Caco-2 (cell line): ENCODE measurements at regions of chr3 and their contacts with region 1.

Region 1: GRCh38 chr3:192237992-192238608 is 489.2 kb downstream of the FGF12 start:
- DNase-seq: peak; percentile 37 to 40
- H3K4me3 ChIP-seq: no peak overlapping the region
- H3K4me3 Mint-ChIP-seq: no peak overlapping the region
- H3K27ac Mint-ChIP-seq: no peak overlapping the region
- H3K4me1 ChIP-seq: peaks cover 11% of the 10 kb centered on the region
- H3K4me1 Mint-ChIP-seq: no peaks in the 10 kb centered on the region
- H3K27me3 ChIP-seq: no peaks in the 10 kb centered on the region
- H3K27me3 Mint-ChIP-seq: peaks cover 6% of the 10 kb centered on the region
- CTCF ChIP-seq: peak; percentile 20 to 43

Region 2: DNA sequence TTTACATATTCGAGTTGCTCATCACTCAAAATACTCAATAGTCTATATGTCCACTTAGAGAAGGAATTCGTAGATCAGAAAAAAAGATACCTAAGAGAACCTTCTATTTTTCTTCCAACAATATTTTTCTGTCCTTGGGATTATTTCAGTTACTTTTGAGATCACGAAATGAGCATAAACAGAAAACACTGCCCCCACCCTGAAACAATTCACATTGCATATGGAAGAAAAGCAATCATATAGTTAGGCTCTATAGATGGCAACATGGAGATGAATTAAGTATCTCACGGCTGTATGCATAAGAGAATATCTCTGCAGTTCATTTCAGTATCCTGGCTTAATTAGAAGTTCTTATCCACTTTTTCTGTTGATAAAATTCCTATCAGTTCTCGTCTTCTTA is 98.2 kb after region 1 on chr3:
- CTCF ChIA-PET with region 1: no interaction called
- POLR2A ChIA-PET with region 1: no interaction called
- intact Hi-C with region 1: loop called (anchors 5 kb)
- DNase-seq: no peak
- H3K4me3 ChIP-seq: no peak overlapping the region
- H3K4me3 Mint-ChIP-seq: no peak overlapping the region
- H3K27ac Mint-ChIP-seq: no peak overlapping the region
- H3K4me1 ChIP-seq: no peaks in the 10 kb centered on the region; the same call in 1 of the 2 replicates
- H3K4me1 Mint-ChIP-seq: no peaks in the 10 kb centered on the region
- H3K27me3 ChIP-seq: no peaks in the 10 kb centered on the region
- H3K27me3 Mint-ChIP-seq: no peaks in the 10 kb centered on the region
- CTCF ChIP-seq: peak in 1 of 2 experiments; percentile 17

Region 3: DNA sequence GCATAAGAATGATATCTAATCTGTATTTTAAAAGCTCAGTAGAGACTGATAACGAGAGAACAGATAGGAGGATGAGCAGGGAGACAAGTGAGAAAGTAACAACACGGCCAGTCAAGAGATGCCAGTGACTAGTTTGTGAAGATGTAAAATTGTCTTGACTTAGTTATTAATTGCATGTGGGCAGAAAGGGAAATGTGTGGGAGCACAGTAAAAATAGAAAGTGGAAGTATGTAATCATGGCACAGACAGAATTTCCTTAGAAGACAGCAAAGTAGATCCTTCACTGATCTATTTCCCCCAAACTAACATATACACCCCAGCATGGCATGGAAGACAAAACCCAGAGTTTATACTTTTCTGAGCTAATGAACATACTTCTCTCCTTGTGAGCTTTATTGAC is 144.8 kb after region 1 on chr3:
- CTCF ChIA-PET with region 1: no interaction called
- POLR2A ChIA-PET with region 1: no interaction called
- intact Hi-C with region 1: no loop called
- DNase-seq: no peak
- H3K4me3 ChIP-seq: no peak overlapping the region
- H3K4me3 Mint-ChIP-seq: no peak overlapping the region
- H3K27ac Mint-ChIP-seq: no peak overlapping the region
- H3K4me1 ChIP-seq: no peaks in the 10 kb centered on the region
- H3K4me1 Mint-ChIP-seq: no peaks in the 10 kb centered on the region
- H3K27me3 ChIP-seq: no peaks in the 10 kb centered on the region
- H3K27me3 Mint-ChIP-seq: peaks cover 13% of the 10 kb centered on the region
- CTCF ChIP-seq: no peak